CD14-positive monocyte (primary cell): ENCODE measurements at regions of chr12 and their contacts with region 1.

Region 1: GRCh38 chr12:25074954-25075353 is 120.0 kb downstream of the DNAI7 start:
- DNase-seq: peak in 1 of 3 donors; percentile 15
- H3K4me3 ChIP-seq: no peak overlapping the region
- H3K4me3 Mint-ChIP-seq: no peak overlapping the region
- H3K27ac ChIP-seq: peak overlapping the region in 1 of 2 donors; percentile 79
- H3K27ac Mint-ChIP-seq: peak overlapping the region in 2 of 7 donors; percentile 18 to 41
- H3K4me1 ChIP-seq: peaks cover 32 to 49% of the 10 kb centered on the region in 2 donors
- H3K4me1 Mint-ChIP-seq: peaks cover 39% of the 10 kb centered on the region
- H3K27me3 ChIP-seq: no peaks in the 10 kb centered on the region
- H3K27me3 Mint-ChIP-seq: peaks cover 0 to 1% (median 0%) of the 10 kb centered on the region in 3 donors
- CTCF ChIP-seq: no peak

Region 2: GRCh38 chr12:24991209-24992049 is 83.5 kb before region 1 on chr12:
- intact Hi-C with region 1: loop called in 1 of 2 experiments (anchors 10 kb)
- DNase-seq: peak; percentile 63 to 75 (median 67)
- H3K4me3 ChIP-seq: no peak overlapping the region
- H3K4me3 Mint-ChIP-seq: no peak overlapping the region
- H3K27ac ChIP-seq: no peak overlapping the region
- H3K27ac Mint-ChIP-seq: no peak overlapping the region
- H3K4me1 ChIP-seq: no peaks in the 10 kb centered on the region
- H3K4me1 Mint-ChIP-seq: peaks cover 3% of the 10 kb centered on the region
- H3K27me3 ChIP-seq: no peaks in the 10 kb centered on the region
- H3K27me3 Mint-ChIP-seq: peaks cover 2 to 8% (median 5%) of the 10 kb centered on the region in 3 donors
- CTCF ChIP-seq: peak; percentile 77

Region 3: GRCh38 chr12:25146686-25147085 is 71.7 kb after region 1 on chr12:
- intact Hi-C with region 1: no loop called
- DNase-seq: no peak
- H3K4me3 ChIP-seq: no peak overlapping the region
- H3K4me3 Mint-ChIP-seq: no peak overlapping the region
- H3K27ac ChIP-seq: no peak overlapping the region
- H3K27ac Mint-ChIP-seq: no peak overlapping the region
- H3K4me1 ChIP-seq: no peaks in the 10 kb centered on the region
- H3K4me1 Mint-ChIP-seq: no peaks in the 10 kb centered on the region
- H3K27me3 ChIP-seq: no peaks in the 10 kb centered on the region
- H3K27me3 Mint-ChIP-seq: peaks cover 0 to 2% (median 0%) of the 10 kb centered on the region in 3 donors
- CTCF ChIP-seq: no peak

Region 4: GRCh38 chr12:25276199-25276937 is 201.4 kb after region 1 on chr12:
- intact Hi-C with region 1: no loop called
- DNase-seq: peak; percentile 19 to 51 (median 26)
- H3K4me3 ChIP-seq: no peak overlapping the region
- H3K4me3 Mint-ChIP-seq: no peak overlapping the region
- H3K27ac ChIP-seq: no peak overlapping the region
- H3K27ac Mint-ChIP-seq: peak overlapping the region in 1 of 7 donors; percentile 2
- H3K4me1 ChIP-seq: no peaks in the 10 kb centered on the region
- H3K4me1 Mint-ChIP-seq: no peaks in the 10 kb centered on the region
- H3K27me3 ChIP-seq: no peaks in the 10 kb centered on the region
- H3K27me3 Mint-ChIP-seq: no peaks in the 10 kb centered on the region
- CTCF ChIP-seq: no peak